Dorsolateral prefrontal cortex (tissue), 120 donors: ENCODE measurements at regions of chrX and their contacts with region 1.

Region 1: DNA sequence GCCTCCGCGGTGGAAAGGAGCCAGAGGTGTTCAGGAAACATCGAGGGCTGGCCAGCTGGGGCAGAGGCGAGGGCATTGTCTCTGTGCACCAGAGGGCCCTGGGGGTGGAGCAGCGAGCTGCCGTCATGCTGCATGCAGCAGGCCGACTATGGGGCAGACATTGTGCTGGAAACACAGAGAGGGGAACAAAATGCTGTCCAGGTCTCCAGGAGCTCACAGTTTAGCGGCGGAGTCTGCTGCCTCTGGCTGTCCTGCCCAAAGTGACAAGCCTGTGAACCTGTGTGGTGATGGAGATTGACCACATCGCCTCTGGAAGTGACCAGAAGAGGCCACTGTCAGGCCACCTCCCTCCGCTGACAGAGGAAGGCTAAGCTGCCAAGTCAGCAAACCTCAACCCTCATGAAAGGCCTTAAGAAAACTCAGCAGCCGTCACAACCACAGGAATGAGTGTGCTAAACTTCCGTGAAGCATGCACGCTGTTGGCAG is 20.1 kb upstream of the SASH3 start:
- DNase-seq: peak in 9 of 10 donors; percentile 27 to 67 (median 60)
- H3K4me3 ChIP-seq: peak overlapping the region in 1 of 59 donors; percentile 2
- H3K27ac ChIP-seq: peak overlapping the region in 24 of 59 donors; percentile 1 to 67 (median 26)
- H3K27me3 ChIP-seq: peaks cover 0 to 55% (median 4%) of the 10 kb centered on the region in 45 donors
- CTCF ChIP-seq: peak in 46 of 56 donors; percentile 17 to 67 (median 42)

Region 2: DNA sequence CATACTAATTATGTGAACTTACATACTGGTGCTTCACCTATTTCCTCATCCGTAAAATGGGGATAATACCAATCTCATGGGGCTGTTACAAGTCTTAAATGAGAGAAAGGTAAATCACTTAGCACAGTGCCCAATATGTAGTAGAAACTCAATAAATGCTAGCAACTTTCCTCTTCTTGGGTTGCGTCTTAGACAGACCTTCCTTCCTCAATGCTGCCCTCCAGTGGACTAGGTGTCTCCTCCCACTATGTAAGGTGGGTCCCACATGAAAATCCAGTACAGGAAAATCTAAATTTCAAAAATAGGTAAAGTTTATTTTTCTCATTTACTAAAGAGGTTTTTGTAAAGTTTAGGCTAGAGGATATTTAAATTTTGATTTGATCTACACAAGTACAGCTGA is 63.5 kb after region 1 on chrX:
- intact Hi-C with region 1: loop called in 1 of 2 experiments (anchors 5 kb)
- DNase-seq: peak in 1 of 10 donors; percentile 11
- H3K4me3 ChIP-seq: no peak overlapping the region
- H3K27ac ChIP-seq: peak overlapping the region in 31 of 59 donors; percentile 7 to 96 (median 44)
- H3K27me3 ChIP-seq: peaks cover 0 to 5% (median 0%) of the 10 kb centered on the region in 45 donors
- CTCF ChIP-seq: peak in 52 of 56 donors; percentile 24 to 69 (median 51)

Region 3: GRCh38 chrX:129843459-129844306 is 84.1 kb after region 1 on chrX and contains the start of gene ZDHHC9:
- intact Hi-C with region 1: loop called in 1 of 2 experiments (anchors 10 kb)
- DNase-seq: peak; percentile 82 to 94 (median 90)
- H3K4me3 ChIP-seq: peak within 1 kb of the TSS; percentile 34 to 80 (median 69)
- H3K27ac ChIP-seq: peak within 1 kb of the TSS in 55 of 59 donors; percentile 0 to 97 (median 72)
- H3K27me3 ChIP-seq: peaks cover 0 to 34% (median 0%) of the 10 kb centered on the region in 45 donors
- CTCF ChIP-seq: peak in 35 of 56 donors; percentile 10 to 54 (median 31)
- total RNA-seq, gene ZDHHC9: 24.3 to 185 (median 54.5) TPM

Region 4: GRCh38 chrX:129876771-129877305 is 117.2 kb after region 1 on chrX:
- intact Hi-C with region 1: loop called in 1 of 2 experiments (anchors 10 kb)
- DNase-seq: no peak
- H3K4me3 ChIP-seq: no peak overlapping the region
- H3K27ac ChIP-seq: no peak overlapping the region
- H3K27me3 ChIP-seq: peaks cover 0 to 88% (median 8%) of the 10 kb centered on the region in 45 donors
- CTCF ChIP-seq: no peak